ENCODE measurements at regions of chr10 and their contacts with region 1.

Region 1: DNA sequence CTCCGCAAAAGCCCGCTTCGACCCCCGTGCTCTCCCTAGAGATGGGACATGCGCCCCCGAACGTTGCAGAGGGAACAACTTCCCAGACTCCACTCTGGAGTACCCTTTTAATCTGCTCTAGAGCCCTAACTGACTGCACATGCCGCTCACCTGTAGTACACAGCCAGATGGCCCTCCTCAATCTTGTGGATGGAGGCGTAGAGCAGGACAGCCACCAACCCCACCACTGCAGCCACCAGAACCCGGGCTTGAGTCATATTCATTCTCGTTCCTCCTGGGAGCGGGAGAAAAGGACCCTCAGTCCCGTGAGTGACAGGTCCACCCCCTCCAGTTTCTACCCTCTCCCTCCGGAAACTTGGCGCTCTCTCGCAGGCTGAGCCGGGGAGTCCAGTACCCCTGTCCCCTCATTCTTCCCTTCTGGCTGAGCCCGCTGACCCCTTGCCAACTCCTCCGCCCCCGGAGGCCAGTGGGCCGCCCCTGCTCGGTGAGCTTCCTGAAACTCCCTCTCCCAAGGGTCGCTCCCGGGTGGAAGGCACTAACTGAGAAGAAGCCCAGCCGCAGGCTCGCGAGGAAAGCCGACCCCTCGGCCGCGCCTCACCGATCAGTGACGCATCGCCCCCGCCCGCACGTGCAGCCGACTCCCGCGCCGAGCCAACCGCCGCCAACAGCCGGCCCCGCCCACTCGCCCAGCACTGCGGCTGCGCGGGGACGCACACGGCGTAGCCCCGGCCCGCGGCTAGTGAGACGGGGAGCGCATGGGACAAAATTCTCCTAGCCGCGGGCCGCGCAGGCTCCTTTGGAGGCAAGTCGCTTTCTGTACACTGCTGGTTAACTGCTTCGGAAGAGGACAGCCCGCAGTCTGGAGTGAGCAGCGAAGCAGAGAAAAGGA is at the start of gene ERLIN1:
- DNase-seq: peak; percentile 97
- ATAC-seq: peak; percentile 90
- H3K4me3 Mint-ChIP-seq: peak within 1 kb of the TSS; percentile 97
- H3K27ac Mint-ChIP-seq: peak within 1 kb of the TSS; percentile 97
- H3K4me1 Mint-ChIP-seq: peaks cover 48% of the 10 kb centered on the region
- H3K27me3 Mint-ChIP-seq: no peaks in the 10 kb centered on the region
- total RNA-seq, gene ERLIN1: 15.2 to 18.7 TPM

Region 2: GRCh38 chr10:99620713-99621453 is 564.7 kb before region 1 on chr10:
- CTCF ChIA-PET with region 1: no interaction called
- POLR2A ChIA-PET with region 1: no interaction called
- intact Hi-C with region 1: loop called in 1 of 2 experiments (anchors 2 kb)
- DNase-seq: peak; percentile 94
- ATAC-seq: peak; percentile 89
- H3K4me3 Mint-ChIP-seq: peak overlapping the region; percentile 96
- H3K27ac Mint-ChIP-seq: peak overlapping the region; percentile 96
- H3K4me1 Mint-ChIP-seq: peaks cover 39% of the 10 kb centered on the region
- H3K27me3 Mint-ChIP-seq: no peaks in the 10 kb centered on the region

Region 3: DNA sequence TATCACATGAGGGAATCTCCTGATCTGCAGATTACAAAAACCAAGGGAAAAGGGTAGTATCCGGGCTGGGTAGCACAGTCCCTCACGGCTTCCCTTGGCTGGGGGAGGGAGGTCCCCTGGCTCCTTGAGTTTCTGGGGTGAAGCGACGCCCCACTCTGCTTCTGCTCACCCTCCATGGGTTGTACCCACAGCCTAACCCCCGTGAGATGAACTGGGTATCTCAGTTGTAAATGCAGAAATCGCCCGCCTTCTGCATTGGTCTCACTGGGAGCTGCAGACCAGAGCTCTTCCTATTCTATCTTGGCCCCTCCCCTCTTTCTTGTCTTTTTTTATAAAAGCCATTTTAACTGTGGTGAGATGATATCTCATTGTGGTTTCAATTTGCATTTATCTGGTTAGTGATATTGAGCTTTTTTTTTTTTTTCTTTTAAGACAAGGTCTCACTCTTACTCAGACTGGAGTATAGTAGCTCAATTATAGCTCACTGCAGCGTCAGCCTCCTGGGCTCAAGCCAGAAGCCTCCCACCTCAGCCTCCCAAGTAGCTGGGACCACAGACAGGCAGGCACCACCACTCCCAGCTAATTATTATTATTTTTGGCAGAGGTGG is 315.4 kb before region 1 on chr10:
- CTCF ChIA-PET with region 1: interaction called, 3 read pairs
- POLR2A ChIA-PET with region 1: no interaction called
- intact Hi-C with region 1: loop called in 1 of 2 experiments (anchors 5 kb)
- DNase-seq: peak; percentile 75
- ATAC-seq: peak; percentile 96
- H3K4me3 Mint-ChIP-seq: peak overlapping the region; percentile 13
- H3K27ac Mint-ChIP-seq: no peak overlapping the region
- H3K4me1 Mint-ChIP-seq: peaks cover 19% of the 10 kb centered on the region
- H3K27me3 Mint-ChIP-seq: peaks cover 85% of the 10 kb centered on the region

Region 4: DNA sequence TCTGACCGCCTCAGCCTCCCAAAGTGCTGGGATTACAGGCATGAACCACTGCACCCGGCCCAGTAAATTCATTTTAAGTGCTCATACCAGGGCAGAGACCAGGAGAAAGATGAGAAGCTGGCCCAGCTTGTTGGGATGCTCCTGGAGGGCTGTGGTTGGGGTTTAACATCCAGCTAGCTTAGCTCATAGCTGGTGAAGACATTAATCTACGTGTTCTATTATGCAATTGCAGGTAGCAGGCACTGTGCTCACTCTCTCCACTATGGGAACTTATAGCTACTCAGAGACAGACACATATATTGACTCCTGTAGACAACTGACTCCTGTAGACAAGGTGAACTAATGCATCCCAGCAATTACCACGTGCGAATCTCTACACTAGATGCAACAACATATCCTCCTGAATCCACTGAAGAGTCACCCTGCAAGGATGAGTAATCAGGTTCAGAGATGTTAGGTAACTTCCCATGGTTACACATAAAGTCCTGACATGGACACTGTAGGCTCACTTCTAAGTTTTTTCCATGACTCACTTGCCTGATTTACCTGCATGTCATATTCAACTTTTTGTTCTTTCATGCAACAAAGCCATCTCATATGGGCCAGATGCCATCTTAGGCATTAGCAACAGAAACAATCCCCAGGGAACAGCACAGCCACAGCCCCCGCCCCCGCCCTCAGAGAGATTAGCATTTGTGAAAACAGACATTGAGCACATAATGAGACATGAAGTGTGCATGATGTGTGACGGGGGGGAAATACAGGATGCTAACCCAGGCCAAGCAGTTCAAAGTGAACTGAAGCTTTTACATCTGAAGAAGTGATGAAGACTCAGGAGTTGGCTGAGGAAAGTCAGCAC is 37.0 kb before region 1 on chr10:
- CTCF ChIA-PET with region 1: interaction called, 7 read pairs
- POLR2A ChIA-PET with region 1: no interaction called
- intact Hi-C with region 1: loop called (anchors 1 to 2 kb)
- DNase-seq: peak; percentile 77
- ATAC-seq: peak; percentile 97
- H3K4me3 Mint-ChIP-seq: no peak overlapping the region
- H3K27ac Mint-ChIP-seq: peak overlapping the region; percentile 82
- H3K4me1 Mint-ChIP-seq: peaks cover 35% of the 10 kb centered on the region
- H3K27me3 Mint-ChIP-seq: peaks cover 7% of the 10 kb centered on the region

Region 5: GRCh38 chr10:100229819-100230422 is 44.3 kb after region 1 on chr10:
- CTCF ChIA-PET with region 1: interaction called, 3 read pairs
- POLR2A ChIA-PET with region 1: no interaction called
- intact Hi-C with region 1: loop called (anchors 1 to 2 kb)
- DNase-seq: no peak
- ATAC-seq: no peak
- H3K4me3 Mint-ChIP-seq: peak overlapping the region; percentile 84
- H3K27ac Mint-ChIP-seq: peak overlapping the region; percentile 78
- H3K4me1 Mint-ChIP-seq: peaks cover 19% of the 10 kb centered on the region
- H3K27me3 Mint-ChIP-seq: no peaks in the 10 kb centered on the region

Region 6: DNA sequence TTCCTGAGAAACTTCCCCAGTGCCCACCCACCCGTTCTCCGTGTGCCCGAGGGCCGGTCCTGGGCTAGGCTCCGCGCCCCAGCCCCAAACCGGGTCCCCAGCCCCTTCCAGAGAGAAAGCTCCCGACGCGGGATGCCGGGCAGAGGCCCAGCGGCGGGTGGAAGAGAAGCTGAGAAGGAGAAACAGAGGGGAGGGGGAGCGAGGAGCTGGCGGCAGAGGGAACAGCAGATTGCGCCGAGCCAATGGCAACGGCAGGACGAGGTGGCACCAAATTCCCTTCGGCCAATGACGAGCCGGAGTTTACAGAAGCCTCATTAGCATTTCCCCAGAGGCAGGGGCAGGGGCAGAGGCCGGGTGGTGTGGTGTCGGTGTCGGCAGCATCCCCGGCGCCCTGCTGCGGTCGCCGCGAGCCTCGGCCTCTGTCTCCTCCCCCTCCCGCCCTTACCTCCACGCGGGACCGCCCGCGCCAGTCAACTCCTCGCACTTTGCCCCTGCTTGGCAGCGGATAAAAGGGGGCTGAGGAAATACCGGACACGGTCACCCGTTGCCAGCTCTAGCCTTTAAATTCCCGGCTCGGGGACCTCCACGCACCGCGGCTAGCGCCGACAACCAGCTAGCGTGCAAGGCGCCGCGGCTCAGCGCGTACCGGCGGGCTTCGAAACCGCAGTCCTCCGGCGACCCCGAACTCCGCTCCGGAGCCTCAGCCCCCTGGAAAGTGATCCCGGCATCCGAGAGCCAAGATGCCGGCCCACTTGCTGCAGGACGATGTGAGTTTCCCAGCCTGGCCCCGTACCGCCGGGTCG is 161.4 kb after region 1 on chr10 and contains the start of gene SCD:
- CTCF ChIA-PET with region 1: interaction called, 4 read pairs
- POLR2A ChIA-PET with region 1: interaction called, 3 read pairs
- intact Hi-C with region 1: loop called (anchors 1 to 5 kb)
- DNase-seq: peak; percentile 94
- ATAC-seq: peak; percentile 92
- H3K4me3 Mint-ChIP-seq: peak within 1 kb of the TSS; percentile 88
- H3K27ac Mint-ChIP-seq: peak within 1 kb of the TSS; percentile 91
- H3K4me1 Mint-ChIP-seq: peaks cover 44% of the 10 kb centered on the region
- H3K27me3 Mint-ChIP-seq: no peaks in the 10 kb centered on the region
- total RNA-seq, gene SCD: 203 to 206 TPM

Measured in activated CD4-positive, alpha-beta T cell treated with anti-CD3 and anti-CD28 coated beads for 36 hours (primary cell).